ENCODE measurements at regions of chr16 and their contacts with region 1.

Region 1: DNA sequence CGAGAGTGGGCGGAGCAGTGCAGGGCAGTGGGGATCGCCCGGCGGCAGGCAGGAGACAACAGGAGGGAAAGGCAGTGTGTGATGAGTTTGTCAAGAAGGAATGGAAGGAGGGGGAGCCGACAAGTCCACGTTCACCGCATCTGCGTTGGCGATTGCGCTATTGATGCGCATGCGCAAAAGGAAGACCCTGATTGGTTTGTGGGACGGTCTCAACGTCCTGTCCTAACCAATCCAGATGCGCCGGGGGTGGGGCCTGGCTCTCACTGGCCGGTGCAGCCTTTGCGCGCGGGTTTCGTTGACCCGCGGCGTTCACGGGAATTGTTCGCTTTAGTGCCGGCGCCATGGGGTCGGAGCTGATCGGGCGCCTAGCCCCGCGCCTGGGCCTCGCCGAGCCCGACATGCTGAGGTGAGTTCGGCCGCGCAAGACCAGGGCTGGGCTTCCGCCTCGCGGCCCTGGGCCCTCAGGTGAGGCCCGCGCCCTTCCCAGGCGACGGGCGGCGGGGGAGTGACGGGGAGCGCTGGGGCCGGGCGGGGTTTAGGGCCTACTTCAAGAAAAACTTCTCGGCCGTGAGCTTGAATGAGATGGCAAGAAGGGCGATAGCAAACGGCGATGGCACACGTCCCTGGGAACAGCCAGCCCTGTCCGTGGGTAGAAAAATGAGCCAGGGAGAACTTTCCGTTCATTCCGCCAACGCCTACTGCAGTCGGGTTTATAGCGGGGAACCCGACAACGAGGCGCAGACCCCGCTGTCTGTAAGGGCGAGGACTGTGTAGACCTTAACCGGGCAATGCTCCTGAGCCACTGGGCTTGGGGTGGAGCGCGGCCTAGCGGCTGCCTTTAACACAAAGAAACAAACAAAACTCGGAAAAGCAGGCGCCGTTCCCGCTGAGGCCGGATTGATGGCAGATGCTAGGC is at the start of gene ORC6:
- DNase-seq: peak; percentile 83
- ATAC-seq: peak; percentile 93
- H3K4me3 ChIP-seq: peak within 1 kb of the TSS; percentile 85 to 94
- H3K27ac ChIP-seq: peak within 1 kb of the TSS; percentile 91
- H3K4me1 ChIP-seq: peaks cover 25% of the 10 kb centered on the region
- H3K27me3 ChIP-seq: no peaks in the 10 kb centered on the region
- CTCF ChIP-seq: peak; percentile 55
- total RNA-seq, gene ORC6: 33.5 TPM

Region 2: DNA sequence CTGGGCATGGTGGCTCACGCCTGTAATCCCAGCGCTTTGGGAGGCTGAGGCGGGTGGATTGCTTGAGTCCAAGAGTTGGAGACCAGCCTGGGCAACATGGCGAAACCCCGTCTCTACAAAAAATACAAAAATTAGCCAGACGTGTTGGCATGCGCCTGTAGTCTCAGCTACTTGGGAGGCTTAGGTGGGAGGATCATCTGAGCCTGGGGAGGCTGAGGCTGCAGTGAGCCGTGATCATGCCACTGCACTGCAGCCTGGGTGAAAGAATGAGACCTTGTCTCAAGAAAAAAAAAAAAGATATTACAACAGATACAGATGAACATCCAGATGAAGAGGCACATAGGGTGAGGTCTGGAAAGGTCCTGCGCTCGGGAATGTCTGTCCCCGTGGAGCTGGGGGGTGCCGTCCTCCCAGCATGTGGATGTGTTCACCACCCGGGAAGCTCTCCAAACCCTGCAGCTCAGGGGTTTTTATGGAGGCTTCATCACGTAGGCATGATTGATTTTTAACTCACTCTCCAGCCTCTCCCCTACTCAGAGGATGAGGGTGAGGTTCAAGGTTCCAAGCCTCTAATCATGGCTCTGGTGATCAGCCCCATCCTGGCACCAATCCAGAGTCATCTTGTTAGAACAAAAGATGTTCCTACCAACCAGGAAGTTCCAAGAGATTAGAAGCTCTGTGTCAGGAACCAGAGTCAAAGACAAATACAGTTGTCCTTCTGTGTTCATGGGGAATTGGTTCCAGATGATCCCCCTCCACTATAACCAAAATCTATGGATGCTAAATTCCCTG is 368.9 kb after region 1 on chr16:
- CTCF ChIA-PET with region 1: interaction called, 13 read pairs
- POLR2A ChIA-PET with region 1: no interaction called
- in situ Hi-C with region 1: no loop called
- intact Hi-C with region 1: no loop called
- DNase-seq: no peak
- ATAC-seq: no peak
- H3K4me3 ChIP-seq: no peak overlapping the region
- H3K27ac ChIP-seq: no peak overlapping the region
- H3K4me1 ChIP-seq: no peaks in the 10 kb centered on the region
- H3K27me3 ChIP-seq: no peaks in the 10 kb centered on the region
- CTCF ChIP-seq: no peak

Measured in Panc1 (cell line).